Heart right ventricle (tissue), 16 donors: ENCODE measurements at regions of chr2 and their contacts with region 1.

Region 1: GRCh38 chr2:241686649-241687425 is at the start of gene DTYMK:
- DNase-seq: peak; percentile 96 to 97
- ATAC-seq: peak; percentile 98 to 99 (median 99)
- H3K4me3 ChIP-seq: peak within 1 kb of the TSS; percentile 62 to 99 (median 89)
- H3K27ac ChIP-seq: peak within 1 kb of the TSS; percentile 78 to 98 (median 93)
- H3K4me1 ChIP-seq: peaks cover 10 to 32% (median 25%) of the 10 kb centered on the region in 9 donors
- H3K27me3 ChIP-seq: no peaks in the 10 kb centered on the region
- CTCF ChIP-seq: no peak
- total RNA-seq, gene DTYMK: 6.4 to 12.4 (median 9.3) TPM

Region 2: DNA sequence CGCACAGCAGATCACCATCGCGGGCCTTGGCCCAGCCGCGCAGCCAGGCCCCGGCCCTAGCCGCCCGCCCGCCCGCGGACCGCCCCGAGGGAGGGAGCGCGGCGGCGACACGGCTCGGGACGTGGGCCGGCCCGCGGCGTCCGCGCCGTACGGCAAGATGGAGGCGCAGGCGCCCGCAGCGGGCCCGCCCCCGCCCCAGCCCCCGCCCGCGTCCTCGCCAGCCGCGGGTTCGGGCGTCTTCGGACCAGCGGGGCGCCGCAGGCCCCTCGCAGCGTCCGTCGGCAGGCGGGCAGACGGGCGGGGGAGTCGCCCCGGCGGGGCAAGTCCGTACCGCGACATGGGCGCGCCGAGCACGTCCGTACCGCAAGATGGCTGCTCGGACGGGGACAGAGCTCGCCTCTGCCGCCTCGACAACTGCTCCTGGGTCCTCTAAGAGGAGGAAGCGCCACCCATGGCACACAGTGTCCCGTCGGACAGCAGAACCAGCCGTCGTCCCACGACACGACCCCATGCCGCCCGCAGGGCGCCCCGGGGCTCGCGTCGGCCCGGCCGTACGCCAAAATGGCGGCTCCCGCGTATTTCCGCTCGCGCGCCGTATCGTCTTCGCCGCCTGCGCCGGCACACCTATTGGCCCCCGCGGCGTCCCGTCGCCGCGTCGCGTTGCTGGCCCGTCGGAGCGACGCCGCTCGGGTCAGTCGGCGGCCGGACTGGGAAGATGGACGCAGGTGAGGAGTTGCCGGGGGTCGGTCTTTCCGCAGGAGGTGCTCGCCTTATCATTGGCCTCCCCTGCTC is 49.6 kb before region 1 on chr2 and contains the starts of genes ATG4B and THAP4:
- intact Hi-C with region 1: loop called in 1 of 10 experiments (anchors 5 kb)
- DNase-seq: peak; percentile 85 to 88
- ATAC-seq: peak; percentile 89 to 95 (median 90)
- H3K4me3 ChIP-seq: peak within 1 kb of the TSS; percentile 34 to 97 (median 86)
- H3K27ac ChIP-seq: peak within 1 kb of the TSS; percentile 91 to 100 (median 99)
- H3K4me1 ChIP-seq: peaks cover 17 to 66% (median 48%) of the 10 kb centered on the region in 9 donors
- H3K27me3 ChIP-seq: no peaks in the 10 kb centered on the region
- CTCF ChIP-seq: no peak
- total RNA-seq, gene ATG4B: 34.7 to 52.1 (median 41.2) TPM
- total RNA-seq, gene THAP4: 68.7 to 101 (median 75.4) TPM

Region 3: DNA sequence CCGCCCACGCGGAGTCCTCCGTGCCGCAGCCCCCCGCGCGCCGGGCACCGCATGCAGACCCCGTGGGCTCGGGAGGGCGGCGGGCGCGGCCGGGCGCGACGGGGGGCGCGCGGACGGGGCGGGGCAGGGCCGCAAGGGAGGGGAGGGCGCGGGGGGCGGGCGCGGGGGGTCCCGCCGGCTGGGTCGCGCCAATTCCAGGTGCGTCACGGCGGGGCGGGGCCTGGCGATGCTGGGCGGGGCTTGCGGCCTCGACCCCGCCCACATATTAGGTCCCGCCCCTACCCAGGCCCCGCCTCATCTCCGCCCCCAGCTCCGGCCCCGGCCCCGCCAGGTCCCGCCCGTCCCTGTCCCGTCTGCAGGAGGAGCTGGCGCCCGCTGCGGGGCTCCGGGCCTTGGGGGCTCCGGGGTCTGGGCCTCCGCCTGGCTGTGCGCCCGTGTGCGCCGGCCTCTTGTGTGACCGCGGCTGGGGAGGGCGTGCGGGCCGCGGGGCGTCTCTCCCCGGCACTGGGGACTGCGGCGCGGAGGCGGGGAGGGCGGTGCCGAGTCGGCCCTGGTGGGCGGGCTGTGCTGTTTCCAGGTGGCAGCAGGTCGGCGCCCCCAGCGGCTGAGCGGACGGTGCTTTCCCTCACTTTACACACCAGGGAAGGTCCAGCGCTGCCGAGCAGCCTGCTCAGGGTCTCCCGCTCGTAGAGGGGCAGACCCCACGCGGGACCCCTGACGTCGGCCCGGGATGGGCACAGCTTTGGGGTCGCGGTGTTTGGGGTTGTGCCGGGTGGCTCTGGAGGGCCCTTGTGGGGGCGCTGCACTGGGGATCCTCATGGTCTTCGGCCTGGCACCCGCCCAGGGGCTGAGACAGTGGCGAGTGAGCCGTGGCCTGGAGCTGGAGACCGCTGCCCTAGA is 15.5 kb after region 1 on chr2:
- intact Hi-C with region 1: loop called in 1 of 10 experiments (anchors 2 kb)
- DNase-seq: peak; percentile 76 to 88
- ATAC-seq: peak; percentile 89 to 94 (median 92)
- H3K4me3 ChIP-seq: peak overlapping the region; percentile 64 to 94 (median 81)
- H3K27ac ChIP-seq: peak overlapping the region; percentile 85 to 95 (median 89)
- H3K4me1 ChIP-seq: peaks cover 3 to 27% (median 19%) of the 10 kb centered on the region in 9 donors
- H3K27me3 ChIP-seq: no peaks in the 10 kb centered on the region
- CTCF ChIP-seq: peak in 7 of 9 donors; percentile 31 to 68 (median 42)